Sciatic nerve (tissue), 2 donors: ENCODE measurements at regions of chr13 and their contacts with region 1.

Region 1: GRCh38 chr13:84272877-84273562 is 390.7 kb upstream of the SLITRK1 start:
- DNase-seq: no peak
- ATAC-seq: no peak

Region 2: GRCh38 chr13:83895994-83896580 is 376.9 kb before region 1 on chr13:
- intact Hi-C with region 1: no loop called
- DNase-seq: no peak
- ATAC-seq: no peak

Region 3: GRCh38 chr13:84230568-84230967 is 42.5 kb before region 1 on chr13:
- intact Hi-C with region 1: loop called (anchors 2 kb)
- DNase-seq: no peak
- ATAC-seq: no peak